AG04450 (cell line): ENCODE measurements at regions of chr4 and their contacts with region 1.

Region 1: GRCh38 chr4:138090150-138090917 is 151.8 kb downstream of the SLC7A11 start:
- DNase-seq: peak; percentile 72
- H3K4me3 ChIP-seq: peak overlapping the region; percentile 45
- H3K27ac ChIP-seq: no peak overlapping the region
- H3K27me3 ChIP-seq: no peaks in the 10 kb centered on the region
- CTCF ChIP-seq: peak; percentile 70

Region 2: DNA sequence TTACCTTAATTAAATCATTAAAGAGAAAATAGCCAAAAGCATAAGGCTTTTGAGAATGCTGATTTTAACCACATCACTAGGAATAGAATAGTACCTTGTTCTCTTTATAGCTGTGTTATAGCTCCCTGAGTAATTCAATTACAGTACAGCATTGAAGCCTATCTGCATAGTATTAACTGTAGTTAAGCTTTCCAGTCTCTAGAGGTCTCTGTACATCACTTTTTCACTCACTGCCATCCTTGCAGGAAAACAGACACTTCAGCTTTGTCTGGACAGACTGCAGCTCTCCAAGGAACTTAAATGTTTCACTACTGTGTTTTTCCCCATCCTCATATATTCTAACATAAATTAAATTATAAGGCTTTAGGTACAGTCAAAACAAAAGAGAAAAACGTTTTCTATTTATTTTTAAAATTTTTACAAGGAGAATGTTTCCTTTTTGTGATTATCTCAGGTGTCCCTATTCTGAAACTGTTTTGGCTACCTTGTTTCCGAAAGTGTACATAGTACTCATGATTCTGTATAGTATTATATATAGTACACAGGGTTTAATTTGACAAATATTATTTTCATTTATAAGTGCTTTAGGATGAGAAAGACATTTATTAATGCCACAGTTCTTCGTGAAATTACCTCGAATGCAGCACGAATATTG is 965.9 kb before region 1 on chr4:
- CTCF ChIA-PET with region 1: interaction called, 13 read pairs
- POLR2A ChIA-PET with region 1: no interaction called
- DNase-seq: peak; percentile 44
- H3K4me3 ChIP-seq: peak overlapping the region; percentile 20
- H3K27ac ChIP-seq: no peak overlapping the region
- H3K27me3 ChIP-seq: no peaks in the 10 kb centered on the region
- CTCF ChIP-seq: peak; percentile 76

Region 3: GRCh38 chr4:137768196-137768595 is 322.1 kb before region 1 on chr4:
- CTCF ChIA-PET with region 1: no interaction called
- POLR2A ChIA-PET with region 1: no interaction called
- DNase-seq: no peak
- H3K4me3 ChIP-seq: no peak overlapping the region
- H3K27ac ChIP-seq: no peak overlapping the region
- H3K27me3 ChIP-seq: no peaks in the 10 kb centered on the region
- CTCF ChIP-seq: no peak

Region 4: GRCh38 chr4:137861682-137862081 is 228.7 kb before region 1 on chr4:
- CTCF ChIA-PET with region 1: interaction called, 12 read pairs
- POLR2A ChIA-PET with region 1: no interaction called
- DNase-seq: peak; percentile 0
- H3K4me3 ChIP-seq: no peak overlapping the region
- H3K27ac ChIP-seq: no peak overlapping the region
- H3K27me3 ChIP-seq: no peaks in the 10 kb centered on the region
- CTCF ChIP-seq: peak; percentile 54

Region 5: GRCh38 chr4:138035781-138036258 is 54.5 kb before region 1 on chr4:
- CTCF ChIA-PET with region 1: interaction called, 99 read pairs
- POLR2A ChIA-PET with region 1: interaction called, 5 read pairs
- DNase-seq: no peak
- H3K4me3 ChIP-seq: no peak overlapping the region
- H3K27ac ChIP-seq: no peak overlapping the region
- H3K27me3 ChIP-seq: no peaks in the 10 kb centered on the region
- CTCF ChIP-seq: peak; percentile 68

Region 6: GRCh38 chr4:138078751-138079520 is 11.4 kb before region 1 on chr4:
- CTCF ChIA-PET with region 1: interaction called, 20 read pairs
- POLR2A ChIA-PET with region 1: no interaction called
- DNase-seq: no peak
- H3K4me3 ChIP-seq: no peak overlapping the region
- H3K27ac ChIP-seq: no peak overlapping the region
- H3K27me3 ChIP-seq: no peaks in the 10 kb centered on the region
- CTCF ChIP-seq: no peak

Region 7: GRCh38 chr4:138114434-138114833 is 24.1 kb after region 1 on chr4:
- CTCF ChIA-PET with region 1: interaction called, 16 read pairs
- POLR2A ChIA-PET with region 1: no interaction called
- DNase-seq: no peak
- H3K4me3 ChIP-seq: no peak overlapping the region
- H3K27ac ChIP-seq: no peak overlapping the region
- H3K27me3 ChIP-seq: no peaks in the 10 kb centered on the region
- CTCF ChIP-seq: no peak

Region 8: DNA sequence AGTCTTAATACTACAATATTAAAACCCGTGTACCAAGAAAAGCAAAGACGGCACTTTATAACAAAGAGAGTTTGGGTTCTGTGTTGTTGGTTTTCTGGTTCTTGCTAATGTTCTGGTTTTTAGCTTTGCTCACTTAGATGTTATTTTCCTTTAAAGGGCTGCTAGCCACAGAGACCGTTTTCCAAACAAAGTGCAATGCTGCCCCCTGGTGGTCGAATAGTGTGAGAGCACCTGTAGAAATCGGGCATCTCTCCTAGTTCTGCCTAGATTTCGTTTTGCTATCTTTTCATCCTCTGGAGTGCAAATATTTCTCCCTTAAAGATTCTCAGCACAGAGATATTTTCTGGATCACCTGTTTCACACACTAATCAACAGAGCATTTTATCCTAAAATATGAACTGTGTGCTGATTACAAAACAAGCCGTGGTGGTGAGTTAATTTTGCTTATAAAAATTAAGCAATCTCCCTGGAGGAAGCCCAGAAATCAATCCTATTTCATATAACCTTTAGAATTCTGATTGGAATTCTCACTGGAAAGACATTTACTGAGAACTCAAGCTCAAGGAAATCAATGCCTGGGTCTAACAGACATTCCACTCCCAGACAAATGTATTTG is 590.8 kb after region 1 on chr4:
- CTCF ChIA-PET with region 1: interaction called, 23 read pairs
- POLR2A ChIA-PET with region 1: no interaction called
- DNase-seq: peak; percentile 65
- H3K4me3 ChIP-seq: no peak overlapping the region
- H3K27ac ChIP-seq: no peak overlapping the region
- H3K27me3 ChIP-seq: no peaks in the 10 kb centered on the region
- CTCF ChIP-seq: peak; percentile 85